B cell (primary cell): ENCODE measurements at regions of chr16 and their contacts with region 1.

Region 1: DNA sequence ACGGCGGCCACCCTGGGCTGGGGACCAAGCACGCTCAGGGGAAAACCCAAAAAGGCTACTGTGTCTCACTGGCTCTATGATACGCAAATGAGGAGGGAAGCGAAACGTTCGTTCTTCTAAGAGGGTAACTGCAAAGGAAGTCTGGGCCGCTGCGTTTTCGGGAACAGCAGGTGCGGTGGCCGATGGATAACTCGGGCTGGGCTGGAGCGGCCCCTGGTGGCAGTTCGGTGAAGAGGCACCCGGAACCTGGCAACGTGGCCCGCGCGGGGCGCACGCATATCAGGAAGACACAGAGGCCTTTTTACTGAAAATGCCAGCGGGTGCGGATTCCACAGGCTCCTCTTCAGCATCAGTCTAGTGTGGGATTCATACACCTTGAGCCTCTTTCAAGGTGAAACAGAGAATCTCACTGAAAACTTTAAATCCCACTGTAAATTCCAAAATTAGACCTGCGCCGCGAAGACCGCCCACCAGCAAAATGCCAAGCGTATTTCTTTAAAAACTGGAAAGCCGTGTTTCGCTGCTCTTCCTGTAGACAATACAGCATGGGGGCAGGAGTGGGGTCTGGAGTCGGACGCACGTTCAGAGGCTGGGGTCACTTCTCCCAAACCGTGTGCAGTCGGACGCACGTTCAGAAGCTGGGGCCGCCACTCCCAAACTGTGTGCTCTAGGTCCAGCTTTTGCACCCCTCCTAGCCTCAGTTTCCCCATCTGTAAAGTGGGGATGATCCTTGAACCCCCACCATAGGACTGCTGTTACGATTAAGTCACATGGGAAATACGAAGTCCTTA is 44.4 kb upstream of the METTL9 start:
- DNase-seq: peak; percentile 100
- ATAC-seq: peak; percentile 98
- H3K4me3 ChIP-seq: peak overlapping the region in 4 of 5 experiments; percentile 15 to 46 (median 34)
- H3K4me3 Mint-ChIP-seq: peak overlapping the region; percentile 84
- H3K27ac ChIP-seq: peak overlapping the region; percentile 70 to 72
- H3K27ac Mint-ChIP-seq: peak overlapping the region; percentile 94
- H3K4me1 ChIP-seq: peaks cover 27 to 34% of the 10 kb centered on the region in 2 donors
- H3K4me1 Mint-ChIP-seq: peaks cover 27% of the 10 kb centered on the region
- H3K27me3 ChIP-seq: no peaks in the 10 kb centered on the region
- H3K27me3 Mint-ChIP-seq: no peaks in the 10 kb centered on the region
- CTCF ChIP-seq: peak; percentile 100

Region 2: DNA sequence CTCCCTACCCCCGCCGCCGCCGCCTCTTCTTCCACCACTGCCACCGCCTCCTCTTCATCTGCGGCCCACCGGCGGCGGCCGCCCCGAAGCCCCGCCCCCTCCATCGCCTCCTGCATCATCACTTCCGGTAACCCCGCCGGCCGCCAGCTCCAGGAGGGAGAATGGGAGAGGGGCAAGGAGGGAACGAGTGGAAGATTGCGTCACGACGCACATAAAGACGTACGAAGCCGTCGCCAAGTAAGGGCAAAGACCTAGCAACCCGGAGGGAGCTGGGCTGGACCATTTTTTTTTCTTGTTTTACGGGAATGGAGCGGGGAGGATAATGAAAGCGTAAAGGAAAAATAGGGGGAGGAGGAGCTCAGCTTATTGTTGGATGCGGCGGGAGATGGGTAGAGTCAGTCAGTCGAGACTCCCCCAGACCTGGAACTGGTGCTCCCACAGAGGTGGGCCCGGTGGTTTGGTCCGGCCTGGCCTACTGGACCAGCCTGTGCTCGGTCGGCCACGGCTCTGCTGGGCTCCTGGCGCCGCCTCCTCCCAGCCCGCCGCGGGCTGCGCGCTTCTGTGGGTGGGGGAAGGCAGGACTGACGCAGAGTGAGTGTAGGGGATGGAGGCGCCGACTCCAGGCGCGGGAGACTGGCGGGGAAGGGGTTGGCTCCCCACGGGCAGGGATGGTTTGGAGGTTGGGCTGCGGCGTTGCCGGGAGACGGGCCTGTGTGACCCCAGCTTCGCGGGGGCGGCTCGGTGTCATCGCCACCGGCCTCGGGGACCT is 654.5 kb before region 1 on chr16 and contains the starts of genes DCUN1D3 and LYRM1:
- CTCF ChIA-PET with region 1: interaction called, 3 read pairs
- POLR2A ChIA-PET with region 1: no interaction called
- intact Hi-C with region 1: loop called (anchors 10 kb)
- DNase-seq: peak; percentile 92
- ATAC-seq: peak; percentile 76
- H3K4me3 ChIP-seq: peak within 1 kb of the TSS; percentile 89 to 96 (median 95)
- H3K4me3 Mint-ChIP-seq: peak within 1 kb of the TSS; percentile 94
- H3K27ac ChIP-seq: peak within 1 kb of the TSS; percentile 77 to 96
- H3K27ac Mint-ChIP-seq: peak within 1 kb of the TSS; percentile 95
- H3K4me1 ChIP-seq: peaks cover 49 to 52% of the 10 kb centered on the region in 2 donors
- H3K4me1 Mint-ChIP-seq: peaks cover 68% of the 10 kb centered on the region
- H3K27me3 ChIP-seq: no peaks in the 10 kb centered on the region
- H3K27me3 Mint-ChIP-seq: no peaks in the 10 kb centered on the region
- CTCF ChIP-seq: no peak
- total RNA-seq, gene DCUN1D3: 5.0 and 5.7 TPM in 2 replicates
- total RNA-seq, gene LYRM1: 19.0 and 21.8 TPM in 2 replicates

Region 3: GRCh38 chr16:21300309-21301167 is 254.5 kb before region 1 on chr16:
- CTCF ChIA-PET with region 1: no interaction called
- POLR2A ChIA-PET with region 1: no interaction called
- intact Hi-C with region 1: loop called (anchors 10 kb)
- DNase-seq: peak; percentile 69
- ATAC-seq: peak; percentile 43
- H3K4me3 ChIP-seq: peak overlapping the region; percentile 51 to 85 (median 65)
- H3K4me3 Mint-ChIP-seq: peak overlapping the region; percentile 97
- H3K27ac ChIP-seq: no peak overlapping the region
- H3K27ac Mint-ChIP-seq: peak overlapping the region; percentile 86
- H3K4me1 ChIP-seq: peaks cover 12 to 26% of the 10 kb centered on the region in 2 donors
- H3K4me1 Mint-ChIP-seq: peaks cover 28% of the 10 kb centered on the region
- H3K27me3 ChIP-seq: no peaks in the 10 kb centered on the region
- H3K27me3 Mint-ChIP-seq: no peaks in the 10 kb centered on the region
- CTCF ChIP-seq: no peak

Region 4: GRCh38 chr16:21574381-21574780 is 19.4 kb after region 1 on chr16:
- CTCF ChIA-PET with region 1: no interaction called
- POLR2A ChIA-PET with region 1: no interaction called
- intact Hi-C with region 1: no loop called
- DNase-seq: no peak
- ATAC-seq: no peak
- H3K4me3 ChIP-seq: no peak overlapping the region
- H3K4me3 Mint-ChIP-seq: no peak overlapping the region
- H3K27ac ChIP-seq: no peak overlapping the region
- H3K27ac Mint-ChIP-seq: no peak overlapping the region
- H3K4me1 ChIP-seq: no peaks in the 10 kb centered on the region
- H3K4me1 Mint-ChIP-seq: no peaks in the 10 kb centered on the region
- H3K27me3 ChIP-seq: no peaks in the 10 kb centered on the region
- H3K27me3 Mint-ChIP-seq: peaks cover 15% of the 10 kb centered on the region
- CTCF ChIP-seq: no peak

Region 5: DNA sequence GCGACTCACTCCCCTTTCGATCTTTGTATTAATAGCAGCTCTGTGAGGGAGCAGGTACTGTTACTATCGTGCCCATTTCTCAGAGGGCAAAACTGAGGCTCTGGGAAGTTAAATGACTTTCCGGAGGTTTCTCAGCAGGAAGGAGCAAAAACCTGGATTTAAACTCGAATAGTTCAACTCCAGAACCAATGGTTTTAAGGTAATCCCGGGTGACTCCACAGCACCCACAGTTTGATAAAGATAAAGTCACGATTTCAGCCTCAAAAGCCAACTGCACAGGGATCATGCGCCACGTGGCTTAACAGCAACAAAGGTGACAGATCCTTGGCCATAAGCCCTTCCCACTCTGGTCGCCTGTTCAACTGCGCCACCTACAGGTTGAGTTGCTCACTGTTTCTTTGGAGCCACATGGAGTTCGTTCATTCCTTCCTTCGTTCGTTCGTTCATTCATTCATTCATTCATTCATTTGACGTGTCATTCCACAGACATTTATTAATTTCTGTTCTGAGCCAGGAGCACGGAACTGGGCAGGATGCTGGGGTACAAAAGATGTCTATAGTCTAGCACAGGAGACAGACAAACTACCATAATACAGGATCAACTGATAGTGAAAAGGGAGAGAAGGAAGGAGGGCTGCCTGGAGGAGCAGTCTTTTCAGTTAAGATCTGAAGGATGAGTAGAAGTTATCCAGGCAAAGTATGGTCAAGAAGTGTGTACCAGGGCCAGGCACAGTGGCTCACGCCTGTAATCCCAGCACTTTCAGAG is 1393.8 kb after region 1 on chr16:
- CTCF ChIA-PET with region 1: interaction called, 5 read pairs
- POLR2A ChIA-PET with region 1: no interaction called
- intact Hi-C with region 1: loop called (anchors 2 kb)
- DNase-seq: peak; percentile 79
- ATAC-seq: peak; percentile 68
- H3K4me3 ChIP-seq: peak overlapping the region in 4 of 5 experiments; percentile 24 to 59 (median 41)
- H3K4me3 Mint-ChIP-seq: peak overlapping the region; percentile 20
- H3K27ac ChIP-seq: no peak overlapping the region
- H3K27ac Mint-ChIP-seq: no peak overlapping the region
- H3K4me1 ChIP-seq: peaks cover 10 to 14% of the 10 kb centered on the region in 2 donors
- H3K4me1 Mint-ChIP-seq: peaks cover 11% of the 10 kb centered on the region
- H3K27me3 ChIP-seq: peaks cover 0 to 29% (median 11%) of the 10 kb centered on the region in 4 experiments
- H3K27me3 Mint-ChIP-seq: peaks cover 34% of the 10 kb centered on the region
- CTCF ChIP-seq: peak; percentile 81

Region 6: GRCh38 chr16:23060458-23061320 is 1505.7 kb after region 1 on chr16:
- CTCF ChIA-PET with region 1: interaction called, 4 read pairs
- POLR2A ChIA-PET with region 1: no interaction called
- intact Hi-C with region 1: loop called (anchors 1 kb)
- DNase-seq: peak; percentile 76
- ATAC-seq: peak; percentile 78
- H3K4me3 ChIP-seq: no peak overlapping the region
- H3K4me3 Mint-ChIP-seq: no peak overlapping the region
- H3K27ac ChIP-seq: no peak overlapping the region
- H3K27ac Mint-ChIP-seq: no peak overlapping the region
- H3K4me1 ChIP-seq: peaks cover 5% of the 10 kb centered on the region in 2 donors
- H3K4me1 Mint-ChIP-seq: peaks cover 7% of the 10 kb centered on the region
- H3K27me3 ChIP-seq: peaks cover 0 to under 1% (median 0%) of the 10 kb centered on the region in 4 experiments
- H3K27me3 Mint-ChIP-seq: peaks cover 11% of the 10 kb centered on the region
- CTCF ChIP-seq: peak; percentile 97